Left colon (tissue), 2 donors: ENCODE measurements at regions of chr14 and their contacts with region 1.

Region 1: GRCh38 chr14:74478996-74479635 is 14.0 kb downstream of the NPC2 start:
- DNase-seq: no peak
- ATAC-seq: peak; percentile 50

Region 2: DNA sequence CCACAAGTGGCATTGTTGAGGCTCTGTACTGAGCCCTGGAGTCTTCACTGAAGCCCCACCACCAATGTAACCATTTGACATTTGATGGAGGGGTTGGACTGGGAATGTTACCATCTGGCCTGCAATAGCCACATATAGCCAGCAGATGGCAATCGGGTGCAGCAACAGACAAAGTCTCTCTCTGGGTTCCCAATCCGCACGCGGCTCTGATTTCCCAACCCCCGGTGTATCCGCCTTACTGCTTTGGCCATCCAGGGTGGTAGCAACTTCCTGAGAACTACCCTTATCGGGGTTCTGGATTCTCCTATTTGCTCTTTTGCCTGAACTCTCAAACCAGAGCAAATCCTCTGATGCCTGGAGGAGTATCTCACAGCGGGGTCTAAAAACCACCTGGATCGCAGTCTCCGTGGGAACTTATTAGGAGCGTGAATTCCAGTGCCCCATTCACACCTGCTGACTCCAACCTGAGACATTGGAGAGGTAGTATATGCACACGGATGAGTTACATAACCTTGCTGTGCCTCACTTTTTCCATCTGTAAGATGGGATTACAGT is 116.7 kb before region 1 on chr14:
- intact Hi-C with region 1: loop called in 1 of 2 experiments (anchors 10 kb)
- DNase-seq: peak; percentile 60 to 75
- ATAC-seq: peak; percentile 80